Ovary (tissue), 10 donors: ENCODE measurements at regions of chr11 and their contacts with region 1.

Region 1: DNA sequence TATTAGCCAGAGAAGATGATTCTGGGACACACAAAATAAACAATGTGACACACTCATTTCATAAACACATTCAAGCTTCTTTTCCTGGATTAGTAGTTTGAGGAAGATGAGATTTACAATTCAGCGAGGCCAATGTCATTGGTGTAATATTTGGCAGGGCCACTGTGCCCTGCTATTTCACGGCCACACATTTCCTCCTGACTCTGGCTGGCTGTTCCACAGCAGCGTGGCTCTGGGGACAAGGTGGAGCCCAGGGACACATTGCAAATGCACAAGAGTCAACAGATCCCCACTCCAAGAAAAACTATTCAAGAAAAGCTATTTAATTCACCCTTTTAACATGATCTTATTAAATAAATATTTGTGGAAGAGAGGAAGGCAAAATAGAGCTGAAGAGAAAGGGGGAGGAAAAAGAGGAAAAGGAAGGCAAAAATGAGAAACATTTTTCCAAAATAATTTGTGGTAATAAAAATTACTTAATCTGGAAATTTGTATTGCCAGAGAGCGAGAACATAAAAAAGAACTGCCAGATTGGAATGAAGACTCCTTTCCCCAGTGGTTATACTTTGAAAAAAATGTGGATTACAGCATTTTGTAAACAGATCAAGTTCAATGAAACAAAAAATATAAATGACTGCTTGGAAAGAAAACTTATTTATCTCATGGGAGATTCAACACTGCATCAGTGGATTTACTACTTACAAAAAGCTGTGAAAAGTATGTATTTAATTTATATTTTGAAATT is 27.1 kb downstream of the NXPE2 start:
- DNase-seq: no peak
- H3K4me3 ChIP-seq: no peak overlapping the region
- H3K27ac ChIP-seq: no peak overlapping the region
- H3K4me1 ChIP-seq: no peaks in the 10 kb centered on the region
- H3K27me3 ChIP-seq: no peaks in the 10 kb centered on the region
- CTCF ChIP-seq: no peak
- EP300 ChIP-seq: no peak
- POLR2A ChIP-seq: no peak

Region 2: GRCh38 chr11:115561116-115561515 is 855.7 kb after region 1 on chr11:
- intact Hi-C with region 1: loop called in 1 of 4 experiments (anchors 5 kb)
- DNase-seq: no peak
- H3K4me3 ChIP-seq: no peak overlapping the region
- H3K27ac ChIP-seq: no peak overlapping the region
- H3K4me1 ChIP-seq: no peaks in the 10 kb centered on the region
- H3K27me3 ChIP-seq: no peaks in the 10 kb centered on the region
- CTCF ChIP-seq: no peak
- EP300 ChIP-seq: no peak
- POLR2A ChIP-seq: no peak